ENCODE measurements at regions of chr15 and their contacts with region 1.

Region 1: DNA sequence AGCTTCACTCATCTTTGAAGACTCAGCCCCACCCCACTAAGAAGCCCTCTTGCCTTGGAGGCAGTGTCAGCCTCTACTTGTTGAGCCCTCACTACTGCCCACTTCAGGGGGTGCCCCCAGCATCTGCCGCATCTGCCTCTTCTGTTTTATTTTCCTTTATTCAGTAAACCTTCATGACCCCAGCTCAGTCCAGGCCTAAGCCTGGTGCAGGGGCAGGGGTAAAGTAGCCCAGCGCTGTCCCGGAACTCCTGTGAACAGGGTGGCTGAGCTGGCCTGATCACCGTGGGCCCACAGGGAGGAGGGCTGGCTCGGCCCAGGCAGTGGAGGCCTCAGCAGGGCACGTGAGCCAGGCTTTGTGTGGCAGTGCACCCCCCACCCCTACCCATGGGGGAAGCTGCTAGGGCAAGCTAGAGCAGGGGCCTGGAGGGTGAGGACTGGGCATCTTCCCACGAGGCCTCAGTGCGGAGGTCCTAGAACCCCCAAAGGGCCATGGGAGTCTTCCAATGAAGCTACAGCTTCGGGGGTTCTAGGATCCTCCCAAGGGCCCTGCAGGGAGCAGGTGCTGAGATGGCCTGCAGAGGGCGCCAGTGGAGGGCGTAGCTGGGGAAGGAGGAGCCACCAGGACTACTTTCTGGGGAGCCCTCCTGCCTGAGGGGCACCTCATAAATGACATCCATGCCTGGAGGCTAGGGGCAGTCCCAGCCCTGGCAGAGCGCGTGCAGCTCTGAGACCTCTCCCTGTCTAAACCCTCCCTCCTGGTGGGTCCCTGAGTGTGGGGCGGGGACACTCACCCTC is 36.0 kb downstream of the TSPAN3 start:
- DNase-seq: peak; percentile 83
- ATAC-seq: peak; percentile 68
- H3K4me3 Mint-ChIP-seq: no peak overlapping the region
- H3K27ac Mint-ChIP-seq: no peak overlapping the region
- H3K4me1 Mint-ChIP-seq: peaks cover 12% of the 10 kb centered on the region
- H3K27me3 Mint-ChIP-seq: peaks cover 3% of the 10 kb centered on the region
- CTCF ChIP-seq: peak; percentile 71

Region 2: DNA sequence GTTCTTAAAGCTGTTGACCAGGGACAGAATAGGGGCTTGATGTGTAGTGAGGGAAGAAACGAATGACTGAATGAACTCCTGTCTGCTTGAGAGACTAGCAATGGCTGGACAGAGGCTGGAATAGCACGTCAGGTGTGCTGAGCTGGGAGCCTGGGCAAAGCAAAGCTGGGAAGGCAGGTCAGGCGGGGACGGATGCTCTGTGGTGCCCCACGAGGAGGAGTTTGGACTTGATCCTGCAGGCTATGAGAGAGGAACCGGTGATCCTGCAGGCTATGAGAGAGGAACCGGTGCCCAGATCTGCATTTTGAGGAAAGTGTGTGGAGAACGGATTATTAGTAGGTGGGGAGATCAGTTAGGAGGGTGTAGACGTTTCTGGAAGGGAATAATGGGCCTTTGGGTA is 71.3 kb before region 1 on chr15:
- CTCF ChIA-PET with region 1: interaction called, 11 read pairs
- POLR2A ChIA-PET with region 1: no interaction called
- DNase-seq: peak; percentile 32
- ATAC-seq: peak; percentile 85
- H3K4me3 Mint-ChIP-seq: no peak overlapping the region
- H3K27ac Mint-ChIP-seq: no peak overlapping the region
- H3K4me1 Mint-ChIP-seq: peaks cover 15% of the 10 kb centered on the region
- H3K27me3 Mint-ChIP-seq: no peaks in the 10 kb centered on the region
- CTCF ChIP-seq: no peak

Region 3: GRCh38 chr15:77024271-77025082 is 10.4 kb before region 1 on chr15:
- CTCF ChIA-PET with region 1: interaction called, 57 read pairs
- POLR2A ChIA-PET with region 1: no interaction called
- DNase-seq: peak; percentile 86
- ATAC-seq: peak; percentile 71
- H3K4me3 Mint-ChIP-seq: no peak overlapping the region
- H3K27ac Mint-ChIP-seq: no peak overlapping the region
- H3K4me1 Mint-ChIP-seq: no peaks in the 10 kb centered on the region
- H3K27me3 Mint-ChIP-seq: peaks cover 8% of the 10 kb centered on the region
- CTCF ChIP-seq: peak; percentile 96

Region 4: DNA sequence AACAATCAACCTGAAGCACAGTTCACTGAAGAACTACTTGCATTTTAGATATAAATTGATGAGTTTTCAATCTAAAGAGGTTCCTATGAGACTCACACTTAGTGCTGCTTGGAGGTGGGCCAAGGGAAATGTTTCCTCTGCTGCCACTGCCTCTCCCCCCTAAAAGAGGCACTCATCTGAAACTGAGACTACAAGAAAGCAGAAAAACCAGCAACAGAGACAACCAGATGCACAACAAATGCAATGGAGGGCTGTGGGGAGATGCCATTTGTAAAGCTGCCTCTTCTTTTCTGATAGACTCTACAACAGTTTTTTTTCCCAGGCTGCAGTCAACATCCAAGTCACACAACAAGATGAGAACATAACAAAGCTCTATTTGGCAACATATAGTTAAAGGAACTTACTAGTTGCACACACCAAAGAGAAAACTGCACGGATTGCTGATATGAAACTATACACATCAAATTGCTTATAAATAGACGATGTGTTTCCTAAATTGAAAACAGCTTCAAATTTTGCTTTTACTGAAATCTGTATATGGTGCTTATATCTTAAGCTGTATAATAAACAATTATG is 25.0 kb after region 1 on chr15:
- CTCF ChIA-PET with region 1: interaction called, 12 read pairs
- POLR2A ChIA-PET with region 1: no interaction called
- DNase-seq: no peak
- ATAC-seq: no peak
- H3K4me3 Mint-ChIP-seq: no peak overlapping the region
- H3K27ac Mint-ChIP-seq: 0 out of 2 replicates have a peak overlapping the region, but pooled peaks have one; percentile 25
- H3K4me1 Mint-ChIP-seq: peaks cover 58% of the 10 kb centered on the region
- H3K27me3 Mint-ChIP-seq: no peaks in the 10 kb centered on the region
- CTCF ChIP-seq: no peak